Activated CD4-positive, alpha-beta T cell treated with anti-CD3 and anti-CD28 coated beads for 36 hours (primary cell): ENCODE measurements at regions of chr7 and their contacts with region 1.

Region 1: DNA sequence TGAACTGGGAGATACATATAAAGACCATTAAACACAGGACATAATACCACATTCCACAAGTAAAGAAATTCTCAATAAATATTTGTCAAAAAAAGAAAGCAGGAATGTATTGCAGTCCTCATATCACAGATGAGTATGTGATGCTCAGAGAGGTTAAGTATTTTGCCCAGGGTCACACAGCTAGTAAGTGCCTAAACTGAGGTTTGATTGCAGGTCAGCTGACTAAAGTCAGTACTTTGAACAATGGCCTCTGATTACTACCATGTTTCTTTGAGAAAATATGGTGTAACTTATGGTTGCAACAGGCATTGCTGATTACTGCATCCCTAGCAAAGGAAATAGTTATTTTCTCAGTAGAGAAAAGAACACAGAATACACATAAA is 267.1 kb downstream of the ELMO1 start:
- DNase-seq: no peak
- ATAC-seq: no peak
- H3K4me3 Mint-ChIP-seq: no peak overlapping the region
- H3K27ac Mint-ChIP-seq: no peak overlapping the region
- H3K4me1 Mint-ChIP-seq: peaks cover 7% of the 10 kb centered on the region
- H3K27me3 Mint-ChIP-seq: no peaks in the 10 kb centered on the region

Region 2: DNA sequence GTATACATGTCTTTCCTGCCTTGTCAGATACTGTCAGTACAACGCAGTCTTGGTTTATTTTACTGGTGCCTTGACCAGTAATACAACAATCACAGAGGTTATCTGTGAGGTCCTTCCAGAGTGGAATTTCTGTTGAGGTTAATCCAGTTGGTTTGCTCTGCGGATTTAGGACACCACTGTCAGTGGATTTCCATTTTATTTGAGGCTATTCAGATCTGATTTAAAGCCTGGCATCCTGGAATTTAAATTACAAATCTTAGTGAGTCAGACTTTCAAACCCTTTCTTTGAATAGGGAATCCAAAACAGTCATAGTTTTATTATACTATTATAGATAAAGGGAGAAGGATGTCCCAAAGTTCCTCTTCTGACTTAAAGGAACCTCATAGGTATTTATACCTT is 751.4 kb before region 1 on chr7:
- CTCF ChIA-PET with region 1: no interaction called
- POLR2A ChIA-PET with region 1: no interaction called
- intact Hi-C with region 1: no loop called
- DNase-seq: no peak
- ATAC-seq: no peak
- H3K4me3 Mint-ChIP-seq: no peak overlapping the region
- H3K27ac Mint-ChIP-seq: no peak overlapping the region
- H3K4me1 Mint-ChIP-seq: no peaks in the 10 kb centered on the region
- H3K27me3 Mint-ChIP-seq: no peaks in the 10 kb centered on the region

Region 3: DNA sequence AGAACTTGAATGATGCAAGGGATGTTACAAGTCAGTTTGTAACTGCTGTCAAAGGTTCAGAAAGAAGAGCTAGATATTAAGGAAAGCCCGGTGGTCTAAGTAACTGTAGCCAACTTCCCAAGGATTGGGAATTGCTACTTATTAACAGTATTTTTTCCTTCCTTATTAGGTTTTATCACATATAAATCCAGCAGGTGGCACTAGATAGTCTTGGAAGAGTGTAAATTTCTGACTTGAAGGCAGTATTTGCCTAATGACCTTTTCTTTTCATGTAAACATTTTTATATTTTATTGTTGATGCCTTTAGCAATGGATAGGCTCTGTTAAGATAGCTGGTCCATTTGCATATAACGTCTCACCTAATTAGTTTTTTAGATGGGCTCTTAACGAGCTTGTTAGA is 740.7 kb before region 1 on chr7:
- CTCF ChIA-PET with region 1: interaction called, 22 read pairs
- POLR2A ChIA-PET with region 1: no interaction called
- intact Hi-C with region 1: no loop called
- DNase-seq: no peak
- ATAC-seq: no peak
- H3K4me3 Mint-ChIP-seq: no peak overlapping the region
- H3K27ac Mint-ChIP-seq: no peak overlapping the region
- H3K4me1 Mint-ChIP-seq: no peaks in the 10 kb centered on the region
- H3K27me3 Mint-ChIP-seq: no peaks in the 10 kb centered on the region

Region 4: DNA sequence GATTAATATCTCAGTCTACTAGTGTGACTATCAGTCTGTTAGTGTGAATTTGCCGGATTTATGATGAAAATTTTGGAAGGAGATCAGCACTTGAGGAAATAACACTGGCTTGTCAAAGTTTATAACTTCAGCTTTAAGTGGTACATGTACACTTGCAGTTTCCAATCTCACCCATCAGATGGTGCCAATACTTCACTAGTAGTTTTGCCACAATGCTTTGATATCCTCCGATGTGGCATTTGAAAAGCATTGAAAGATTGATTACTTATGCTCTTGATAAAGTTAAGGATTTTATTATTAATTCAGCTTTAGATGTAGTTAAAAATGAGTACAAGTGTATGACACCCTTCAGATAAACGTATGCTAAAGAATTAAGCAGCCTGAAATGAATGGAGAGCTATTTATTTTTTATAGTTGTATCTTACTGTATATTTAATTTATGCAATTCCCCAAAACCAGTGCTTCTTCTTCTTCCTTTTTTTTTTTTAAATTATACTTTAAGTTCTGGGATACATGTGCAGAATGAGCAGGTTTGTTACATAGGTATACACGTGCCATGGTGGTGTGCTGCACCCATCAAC is 693.7 kb before region 1 on chr7:
- CTCF ChIA-PET with region 1: interaction called, 65 read pairs
- POLR2A ChIA-PET with region 1: interaction called, 7 read pairs
- intact Hi-C with region 1: loop called (anchors 1 kb)
- DNase-seq: peak; percentile 23
- ATAC-seq: peak; percentile 55
- H3K4me3 Mint-ChIP-seq: no peak overlapping the region
- H3K27ac Mint-ChIP-seq: no peak overlapping the region
- H3K4me1 Mint-ChIP-seq: peaks cover 2% of the 10 kb centered on the region
- H3K27me3 Mint-ChIP-seq: peaks cover 4% of the 10 kb centered on the region

Region 5: DNA sequence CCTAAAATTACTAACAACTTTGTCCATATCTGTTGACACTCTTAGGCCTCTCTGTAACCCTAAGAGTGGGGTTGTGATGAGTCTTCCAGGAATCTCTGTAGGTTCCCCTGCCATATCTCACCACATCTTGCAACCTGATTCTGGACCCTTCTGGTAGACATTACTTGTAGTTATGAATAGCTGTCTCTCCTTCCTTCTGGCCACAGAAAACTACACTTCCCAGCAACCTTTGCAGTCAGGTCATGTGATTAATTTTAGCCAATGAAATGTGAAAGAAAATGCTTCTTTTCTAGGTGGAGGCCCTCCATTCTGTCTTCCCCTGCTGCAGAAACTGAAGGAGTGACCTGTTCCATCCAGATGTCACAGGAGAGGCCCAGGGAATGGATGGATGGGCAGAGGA is 309.7 kb before region 1 on chr7:
- CTCF ChIA-PET with region 1: interaction called, 4 read pairs
- POLR2A ChIA-PET with region 1: no interaction called
- intact Hi-C with region 1: loop called in 1 of 2 experiments (anchors 5 kb)
- DNase-seq: no peak
- ATAC-seq: peak; percentile 30
- H3K4me3 Mint-ChIP-seq: no peak overlapping the region
- H3K27ac Mint-ChIP-seq: no peak overlapping the region
- H3K4me1 Mint-ChIP-seq: peaks cover 4% of the 10 kb centered on the region
- H3K27me3 Mint-ChIP-seq: no peaks in the 10 kb centered on the region

Region 6: DNA sequence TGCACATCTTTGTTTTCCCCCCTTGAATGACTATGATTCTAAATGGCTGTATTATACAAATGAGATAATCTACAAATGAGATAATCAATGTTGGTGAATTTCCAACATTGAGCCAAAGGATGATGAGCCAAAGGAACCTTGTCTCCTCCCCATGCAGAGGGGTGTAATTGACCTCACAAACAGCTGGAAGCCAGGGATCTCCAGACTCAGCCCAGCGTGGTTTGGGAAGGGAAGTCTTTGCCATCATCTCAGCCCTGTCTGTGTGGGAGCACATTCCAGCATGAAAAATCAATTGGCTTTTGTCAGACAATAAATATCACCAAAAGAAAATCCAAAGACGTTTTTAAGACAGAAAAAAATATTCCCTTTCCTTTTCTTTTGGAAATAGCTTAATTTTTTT is 185.8 kb before region 1 on chr7:
- CTCF ChIA-PET with region 1: interaction called, 58 read pairs
- POLR2A ChIA-PET with region 1: no interaction called
- intact Hi-C with region 1: no loop called
- DNase-seq: no peak
- ATAC-seq: no peak
- H3K4me3 Mint-ChIP-seq: no peak overlapping the region
- H3K27ac Mint-ChIP-seq: no peak overlapping the region
- H3K4me1 Mint-ChIP-seq: peaks cover 12% of the 10 kb centered on the region
- H3K27me3 Mint-ChIP-seq: no peaks in the 10 kb centered on the region

Region 7: DNA sequence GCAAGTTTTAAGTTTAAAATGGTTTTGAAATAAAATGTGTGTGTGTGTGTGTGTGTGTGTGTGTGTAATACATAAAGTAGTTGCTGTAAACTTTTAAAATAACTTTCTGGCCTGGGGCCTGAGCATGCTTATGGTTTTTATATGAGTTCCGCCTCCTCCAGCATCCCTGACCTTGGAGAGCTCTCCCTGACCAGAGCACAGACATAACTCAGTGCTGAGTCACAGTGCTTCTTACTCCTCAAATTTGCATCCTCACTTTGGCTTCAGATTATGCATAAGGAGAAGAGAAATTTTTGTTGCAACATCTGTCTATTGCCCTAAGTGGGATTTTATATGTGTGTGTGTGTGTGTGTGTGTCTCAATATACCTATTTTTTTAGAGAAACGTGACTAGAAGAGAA is 66.3 kb after region 1 on chr7:
- CTCF ChIA-PET with region 1: no interaction called
- POLR2A ChIA-PET with region 1: no interaction called
- intact Hi-C with region 1: no loop called
- DNase-seq: no peak
- ATAC-seq: no peak
- H3K4me3 Mint-ChIP-seq: no peak overlapping the region
- H3K27ac Mint-ChIP-seq: no peak overlapping the region
- H3K4me1 Mint-ChIP-seq: peaks cover 41% of the 10 kb centered on the region
- H3K27me3 Mint-ChIP-seq: no peaks in the 10 kb centered on the region